Heart left ventricle (tissue), 16 donors: ENCODE measurements at regions of chr12 and their contacts with region 1.

Region 1: GRCh38 chr12:46661110-46661845 is 164.5 kb downstream of the SLC38A4 start:
- DNase-seq: peak in 2 of 5 donors; percentile 24 to 29
- ATAC-seq: peak; percentile 57 to 83 (median 82)
- H3K4me3 ChIP-seq: no peak overlapping the region
- H3K27ac ChIP-seq: peak overlapping the region in 7 of 12 donors; percentile 49 to 77 (median 68)
- H3K4me1 ChIP-seq: peaks cover 2 to 59% (median 40%) of the 10 kb centered on the region in 12 donors
- H3K27me3 ChIP-seq: no peaks in the 10 kb centered on the region
- CTCF ChIP-seq: peak; percentile 70 to 91 (median 83)
- POLR2A ChIP-seq: no peak

Region 2: DNA sequence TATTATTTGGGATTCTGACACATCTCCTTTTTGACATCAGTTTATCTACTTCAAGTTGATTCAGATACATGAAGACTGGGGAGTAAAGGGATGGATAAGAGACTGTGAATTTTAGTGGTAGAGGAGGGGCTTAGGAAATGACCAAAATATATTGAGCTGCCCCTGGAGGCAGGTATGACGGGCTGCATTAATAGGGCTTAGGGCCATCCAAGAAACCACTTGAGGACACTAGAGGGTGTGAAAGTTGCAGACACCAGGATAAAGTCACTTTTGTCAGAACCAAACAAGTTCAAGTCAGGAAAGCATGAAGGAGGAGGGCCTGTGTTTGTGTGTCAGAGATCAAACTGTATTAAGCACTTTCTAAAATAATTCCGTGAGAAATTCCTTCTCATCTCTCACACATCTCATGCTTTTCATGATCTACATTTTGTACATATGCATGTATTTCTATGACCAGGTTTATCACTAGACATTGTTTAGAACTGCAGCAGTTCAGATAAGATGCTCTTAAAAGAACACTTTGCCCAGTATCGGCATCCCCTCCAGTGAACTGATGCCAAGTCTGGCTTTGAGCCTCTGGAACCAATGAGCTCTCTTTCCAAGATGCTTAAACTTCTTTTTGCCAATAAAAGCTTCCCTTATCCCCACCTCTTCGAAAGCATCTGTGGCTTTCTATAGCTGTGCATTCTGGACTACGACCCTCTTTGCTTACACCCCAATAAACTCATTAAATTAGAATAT is 529.4 kb before region 1 on chr12:
- intact Hi-C with region 1: loop called in 5 of 10 experiments (anchors 5 to 10 kb)
- DNase-seq: no peak
- ATAC-seq: peak in 3 of 4 donors; percentile 42 to 66 (median 43)
- H3K4me3 ChIP-seq: no peak overlapping the region
- H3K27ac ChIP-seq: no peak overlapping the region
- H3K4me1 ChIP-seq: peaks cover 0 to 6% (median 0%) of the 10 kb centered on the region in 12 donors
- H3K27me3 ChIP-seq: peaks cover 0 to 3% (median 0%) of the 10 kb centered on the region in 9 donors
- CTCF ChIP-seq: peak in 4 of 12 donors; percentile 6 to 24 (median 14)
- POLR2A ChIP-seq: no peak

Region 3: DNA sequence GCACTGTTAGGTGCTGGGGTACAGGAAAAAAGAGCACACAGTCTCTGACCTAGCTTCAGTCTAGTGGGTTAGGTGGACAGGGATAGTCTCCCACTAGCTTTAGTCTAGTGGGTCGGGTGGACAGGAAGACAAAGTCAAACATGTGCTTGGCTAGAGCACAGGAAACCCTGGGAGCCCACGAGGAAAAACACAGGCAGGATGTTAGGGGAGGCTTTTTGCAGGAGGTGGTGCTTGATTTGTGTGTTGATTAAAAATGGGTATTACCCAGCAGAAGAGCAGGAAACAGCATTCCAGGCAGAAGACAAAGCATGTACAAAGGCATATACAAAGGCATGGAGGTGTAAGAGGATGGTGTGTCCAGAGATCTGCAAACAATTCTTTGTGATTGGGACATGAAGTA is 312.0 kb before region 1 on chr12:
- intact Hi-C with region 1: loop called in 6 of 10 experiments (anchors 5 to 10 kb)
- DNase-seq: no peak
- ATAC-seq: no peak
- H3K4me3 ChIP-seq: no peak overlapping the region
- H3K27ac ChIP-seq: no peak overlapping the region
- H3K4me1 ChIP-seq: peaks cover 0 to 11% (median 0%) of the 10 kb centered on the region in 12 donors
- H3K27me3 ChIP-seq: no peaks in the 10 kb centered on the region
- CTCF ChIP-seq: no peak
- POLR2A ChIP-seq: no peak

Region 4: GRCh38 chr12:46372544-46373110 is 288.7 kb before region 1 on chr12 and contains the start of gene SLC38A2:
- intact Hi-C with region 1: loop called in 8 of 10 experiments (anchors 2 to 10 kb)
- DNase-seq: peak; percentile 98 to 99 (median 99)
- ATAC-seq: peak; percentile 95 to 97 (median 96)
- H3K4me3 ChIP-seq: peak within 1 kb of the TSS; percentile 73 to 95 (median 88)
- H3K27ac ChIP-seq: peak within 1 kb of the TSS; percentile 93 to 100 (median 97)
- H3K4me1 ChIP-seq: peaks cover 6 to 46% (median 35%) of the 10 kb centered on the region in 12 donors
- H3K27me3 ChIP-seq: no peaks in the 10 kb centered on the region
- CTCF ChIP-seq: no peak
- POLR2A ChIP-seq: peak; percentile 97 to 100
- total RNA-seq, gene SLC38A2: 82.1 to 373 (median 161) TPM

Region 5: GRCh38 chr12:46492471-46493351 is 168.6 kb before region 1 on chr12:
- intact Hi-C with region 1: loop called in 1 of 10 experiments (anchors 10 kb)
- DNase-seq: no peak
- ATAC-seq: peak; percentile 35 to 80 (median 66)
- H3K4me3 ChIP-seq: no peak overlapping the region
- H3K27ac ChIP-seq: peak overlapping the region in 8 of 12 donors; percentile 5 to 64 (median 28)
- H3K4me1 ChIP-seq: peaks cover 3 to 57% (median 37%) of the 10 kb centered on the region in 12 donors
- H3K27me3 ChIP-seq: no peaks in the 10 kb centered on the region
- CTCF ChIP-seq: no peak
- POLR2A ChIP-seq: no peak

Region 6: GRCh38 chr12:46556105-46556559 is 105.1 kb before region 1 on chr12:
- intact Hi-C with region 1: loop called in 3 of 10 experiments (anchors 10 kb)
- DNase-seq: no peak
- ATAC-seq: peak; percentile 87 to 95 (median 93)
- H3K4me3 ChIP-seq: no peak overlapping the region
- H3K27ac ChIP-seq: peak overlapping the region in 11 of 12 donors; percentile 23 to 81 (median 62)
- H3K4me1 ChIP-seq: peaks cover 0 to 47% (median 21%) of the 10 kb centered on the region in 12 donors
- H3K27me3 ChIP-seq: no peaks in the 10 kb centered on the region
- CTCF ChIP-seq: no peak
- POLR2A ChIP-seq: no peak

Region 7: GRCh38 chr12:46702581-46703344 is 41.5 kb after region 1 on chr12:
- intact Hi-C with region 1: no loop called
- DNase-seq: no peak
- ATAC-seq: no peak
- H3K4me3 ChIP-seq: no peak overlapping the region
- H3K27ac ChIP-seq: no peak overlapping the region
- H3K4me1 ChIP-seq: no peaks in the 10 kb centered on the region
- H3K27me3 ChIP-seq: no peaks in the 10 kb centered on the region
- CTCF ChIP-seq: no peak
- POLR2A ChIP-seq: no peak